Psoas muscle (tissue), 8 donors: ENCODE measurements at regions of chr15 and their contacts with region 1.

Region 1: GRCh38 chr15:60916679-60917460 is 312.2 kb downstream of the RORA start:
- DNase-seq: peak; percentile 86 to 90
- ATAC-seq: peak; percentile 87 to 91 (median 88)
- H3K4me3 ChIP-seq: peak overlapping the region; percentile 58
- H3K27ac ChIP-seq: peak overlapping the region; percentile 78
- H3K4me1 ChIP-seq: peaks cover 33% of the 10 kb centered on the region
- H3K27me3 ChIP-seq: no peaks in the 10 kb centered on the region
- CTCF ChIP-seq: peak; percentile 88

Region 2: DNA sequence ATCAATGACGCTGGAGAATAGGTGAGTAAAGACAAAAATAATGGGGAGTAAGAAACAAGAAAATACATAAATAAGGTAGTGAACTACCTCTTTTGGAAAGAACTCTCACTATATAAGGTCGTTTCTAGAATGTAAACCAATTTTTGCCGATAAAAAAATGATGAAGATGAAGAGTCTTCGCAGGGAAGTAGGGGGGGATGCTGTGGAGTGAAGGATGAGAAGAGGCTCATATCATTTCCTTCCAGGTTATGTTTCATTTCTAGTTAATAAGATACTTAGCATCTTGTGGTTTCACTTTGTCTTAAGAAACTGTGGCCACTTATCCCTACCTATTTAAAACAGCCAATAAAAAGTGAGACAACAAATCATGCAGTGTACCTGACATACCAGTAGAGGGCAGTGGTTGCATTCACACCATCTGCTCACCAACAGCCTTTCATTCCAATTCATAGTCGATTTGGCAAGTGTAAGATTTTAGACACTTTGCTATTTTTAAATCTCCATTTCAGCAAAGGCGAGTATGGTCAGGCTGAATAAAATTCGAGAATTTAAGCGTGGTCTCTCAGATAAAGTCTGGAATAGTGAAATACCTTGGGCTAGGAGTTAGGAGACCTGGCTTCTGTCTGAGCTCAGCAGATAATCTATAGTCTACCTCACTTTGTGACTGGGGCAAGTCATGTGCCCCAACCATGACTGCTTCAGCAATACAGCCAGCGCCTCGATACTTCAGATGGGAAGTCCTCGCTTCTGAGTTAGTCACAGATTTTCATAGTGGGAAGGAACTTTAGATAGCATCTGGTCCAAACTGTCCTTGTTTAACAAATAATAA is 409.1 kb before region 1 on chr15:
- intact Hi-C with region 1: loop called in 1 of 2 experiments (anchors 5 kb)
- DNase-seq: no peak
- ATAC-seq: peak; percentile 85 to 91 (median 88)
- H3K4me3 ChIP-seq: no peak overlapping the region
- H3K27ac ChIP-seq: peak overlapping the region; percentile 66
- H3K4me1 ChIP-seq: peaks cover 23% of the 10 kb centered on the region
- H3K27me3 ChIP-seq: no peaks in the 10 kb centered on the region
- CTCF ChIP-seq: peak; percentile 97

Region 3: DNA sequence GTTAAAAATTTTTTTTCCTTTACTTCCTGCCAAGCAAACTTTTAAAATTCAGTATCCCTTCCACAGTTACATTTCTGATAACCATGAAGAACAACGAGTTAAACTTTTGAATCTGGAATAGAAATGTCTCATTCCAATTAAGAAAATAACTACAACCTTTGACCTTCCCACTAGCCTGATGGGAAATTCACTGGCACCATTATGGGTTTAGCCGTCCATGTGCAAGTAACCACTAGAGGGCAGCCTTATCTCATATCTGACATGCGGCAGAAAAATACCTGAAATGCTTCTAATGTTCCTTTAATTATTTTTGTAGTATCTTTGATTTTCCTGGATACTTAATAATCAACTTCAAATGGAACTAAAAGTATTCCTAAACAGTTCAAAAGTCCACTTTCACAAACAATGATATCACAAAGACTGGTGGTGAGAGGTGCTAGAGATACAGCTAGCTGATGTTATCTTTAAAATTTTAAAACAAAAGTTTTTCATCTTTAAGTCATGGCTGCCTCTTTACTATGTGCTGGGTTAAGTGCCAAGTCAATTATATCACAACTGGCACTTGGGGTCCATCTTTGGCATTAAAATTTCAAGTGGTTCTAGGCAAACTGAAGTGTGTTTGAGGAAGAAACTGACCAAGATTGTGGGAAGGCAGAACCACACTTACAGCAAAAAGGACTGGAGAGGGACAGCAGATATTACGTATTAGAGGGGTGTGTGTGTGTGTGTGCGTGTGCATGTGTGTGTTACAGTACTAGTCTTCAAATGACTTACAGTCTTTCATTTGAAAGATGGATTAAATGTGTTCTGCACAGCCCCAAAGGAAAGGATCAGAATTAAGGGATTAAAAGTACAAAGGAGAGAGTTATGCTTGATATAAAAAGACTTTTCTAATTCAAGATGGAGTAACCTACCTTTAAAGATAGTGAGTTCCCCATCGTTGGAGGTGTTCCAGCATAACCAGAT is 330.8 kb before region 1 on chr15:
- intact Hi-C with region 1: loop called (anchors 2 kb)
- DNase-seq: no peak
- ATAC-seq: peak; percentile 71 to 83 (median 76)
- H3K4me3 ChIP-seq: no peak overlapping the region
- H3K27ac ChIP-seq: peak overlapping the region; percentile 31
- H3K4me1 ChIP-seq: peaks cover 75% of the 10 kb centered on the region
- H3K27me3 ChIP-seq: no peaks in the 10 kb centered on the region
- CTCF ChIP-seq: peak; percentile 96

Region 4: DNA sequence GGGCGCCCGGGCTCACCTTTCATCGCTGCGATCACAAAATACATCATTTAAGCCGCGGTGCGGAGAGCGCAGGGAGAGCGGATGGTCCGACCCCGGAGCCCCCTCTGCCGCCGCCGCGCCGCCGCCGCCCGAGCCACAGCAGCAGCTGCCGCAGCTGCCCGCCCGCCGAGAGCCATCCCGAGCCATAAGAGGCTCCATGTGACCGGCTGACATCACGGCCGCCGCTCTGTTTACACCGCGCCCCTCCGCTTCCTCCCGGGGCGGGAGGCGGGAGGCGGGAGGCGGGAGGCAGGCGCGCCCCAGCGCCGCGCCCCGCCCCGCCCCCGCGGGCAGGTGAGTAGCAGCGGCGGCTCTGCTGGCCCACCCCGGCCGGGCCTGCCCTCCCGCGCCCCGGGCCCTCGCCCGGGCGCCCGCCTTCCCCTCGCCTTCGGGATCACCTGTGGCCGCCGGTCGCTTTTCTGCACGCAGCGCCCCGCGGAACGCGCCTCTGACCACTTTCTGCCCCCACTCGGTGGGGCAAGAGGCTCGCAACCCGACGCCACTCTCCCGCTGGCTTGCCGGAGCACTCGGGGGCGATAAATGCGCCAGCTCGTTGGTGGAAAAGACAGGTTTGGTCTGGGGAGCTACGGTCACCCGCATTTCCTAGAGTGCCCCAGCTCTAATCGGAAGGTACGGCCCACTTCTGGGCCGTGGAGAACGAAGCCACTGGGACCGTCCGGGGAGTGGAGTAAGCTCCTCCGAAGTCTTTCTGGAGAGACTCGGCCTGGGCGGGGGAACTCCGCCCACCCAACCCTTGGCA is 324.3 kb before region 1 on chr15:
- intact Hi-C with region 1: loop called in 1 of 2 experiments (anchors 2 kb)
- DNase-seq: peak; percentile 88 to 94
- ATAC-seq: peak; percentile 82 to 86 (median 84)
- H3K4me3 ChIP-seq: peak overlapping the region; percentile 95
- H3K27ac ChIP-seq: peak overlapping the region; percentile 99
- H3K4me1 ChIP-seq: peaks cover 28% of the 10 kb centered on the region
- H3K27me3 ChIP-seq: no peaks in the 10 kb centered on the region
- CTCF ChIP-seq: peak; percentile 25

Region 5: DNA sequence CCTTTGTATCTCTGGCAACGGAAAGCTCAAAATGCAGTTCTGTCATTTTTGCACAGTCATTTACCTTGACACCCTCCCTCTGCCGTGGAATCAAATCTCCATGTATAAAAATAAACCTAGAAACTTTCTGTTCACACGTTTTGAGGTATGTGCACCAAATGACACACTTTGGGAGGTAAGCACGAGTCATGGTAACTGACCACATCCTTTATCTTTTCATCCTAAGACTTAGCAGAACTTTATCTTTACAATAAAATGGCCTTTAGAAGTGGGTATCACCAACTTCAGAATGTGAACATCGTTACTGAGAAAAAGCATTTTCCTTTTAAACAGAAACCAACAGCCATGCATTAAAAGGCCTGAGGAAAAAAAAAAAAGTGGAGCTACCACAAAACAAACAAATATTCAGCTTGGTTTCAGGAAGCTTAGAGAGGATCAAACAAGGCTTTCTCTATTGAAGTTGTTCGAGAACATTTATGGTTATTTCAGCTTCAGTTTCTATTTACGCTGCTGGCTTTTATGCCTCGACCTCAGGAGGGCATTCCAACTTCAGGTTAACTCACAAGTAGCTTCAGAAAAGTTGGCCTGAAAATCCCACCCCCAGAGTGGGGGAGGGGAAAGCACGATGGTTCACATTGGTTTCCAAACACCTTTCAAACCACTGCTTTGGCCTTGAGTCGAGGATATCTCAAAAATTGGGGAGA is 266.9 kb before region 1 on chr15:
- intact Hi-C with region 1: loop called in 1 of 2 experiments (anchors 10 kb)
- DNase-seq: no peak
- ATAC-seq: peak in 2 of 4 donors; percentile 16 to 19
- H3K4me3 ChIP-seq: peak overlapping the region; percentile 10
- H3K27ac ChIP-seq: peak overlapping the region; percentile 83
- H3K4me1 ChIP-seq: peaks cover 55% of the 10 kb centered on the region
- H3K27me3 ChIP-seq: no peaks in the 10 kb centered on the region
- CTCF ChIP-seq: no peak

Region 6: DNA sequence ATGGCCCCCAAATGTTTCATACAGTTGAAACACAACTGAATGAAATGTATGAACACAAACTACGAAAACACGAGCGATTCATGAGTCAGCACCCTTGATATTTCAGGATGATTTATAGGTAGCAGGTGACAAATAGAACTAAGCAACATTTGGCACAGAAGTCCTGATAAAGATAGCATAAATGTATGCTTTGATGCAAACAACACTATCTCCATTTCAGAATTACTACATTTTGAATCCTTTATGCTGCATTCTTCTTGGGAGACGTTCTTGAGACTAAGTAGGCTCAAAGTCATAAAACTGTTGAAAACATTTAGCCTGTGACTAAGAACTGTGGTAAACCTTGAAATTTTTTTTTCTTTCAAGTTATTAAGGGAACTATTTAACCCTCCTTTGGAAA is 237.6 kb before region 1 on chr15:
- intact Hi-C with region 1: loop called in 1 of 2 experiments (anchors 5 kb)
- DNase-seq: no peak
- ATAC-seq: peak; percentile 61 to 76 (median 68)
- H3K4me3 ChIP-seq: peak overlapping the region; percentile 43
- H3K27ac ChIP-seq: peak overlapping the region; percentile 90
- H3K4me1 ChIP-seq: peaks cover 34% of the 10 kb centered on the region
- H3K27me3 ChIP-seq: no peaks in the 10 kb centered on the region
- CTCF ChIP-seq: no peak

Region 7: GRCh38 chr15:61205346-61205921 is 288.6 kb after region 1 on chr15:
- intact Hi-C with region 1: no loop called
- DNase-seq: no peak
- ATAC-seq: peak; percentile 52 to 71 (median 58)
- H3K4me3 ChIP-seq: peak overlapping the region; percentile 62
- H3K27ac ChIP-seq: peak overlapping the region; percentile 90
- H3K4me1 ChIP-seq: peaks cover 68% of the 10 kb centered on the region
- H3K27me3 ChIP-seq: no peaks in the 10 kb centered on the region
- CTCF ChIP-seq: no peak